ENCODE measurements at regions of chr9 and their contacts with region 1.

Region 1: GRCh38 chr9:116484492-116485061 is 202.5 kb upstream of the TRIM32 start:
- DNase-seq: no peak
- H3K4me3 Mint-ChIP-seq: no peak overlapping the region
- H3K27ac Mint-ChIP-seq: no peak overlapping the region
- H3K4me1 Mint-ChIP-seq: no peaks in the 10 kb centered on the region
- H3K27me3 Mint-ChIP-seq: no peaks in the 10 kb centered on the region
- CTCF ChIP-seq: no peak

Region 2: GRCh38 chr9:116394894-116395698 is 89.5 kb before region 1 on chr9:
- CTCF ChIA-PET with region 1: no interaction called
- POLR2A ChIA-PET with region 1: no interaction called
- intact Hi-C with region 1: no loop called
- DNase-seq: no peak
- H3K4me3 Mint-ChIP-seq: no peak overlapping the region
- H3K27ac Mint-ChIP-seq: no peak overlapping the region
- H3K4me1 Mint-ChIP-seq: peaks cover 6% of the 10 kb centered on the region
- H3K27me3 Mint-ChIP-seq: no peaks in the 10 kb centered on the region
- CTCF ChIP-seq: no peak

Region 3: DNA sequence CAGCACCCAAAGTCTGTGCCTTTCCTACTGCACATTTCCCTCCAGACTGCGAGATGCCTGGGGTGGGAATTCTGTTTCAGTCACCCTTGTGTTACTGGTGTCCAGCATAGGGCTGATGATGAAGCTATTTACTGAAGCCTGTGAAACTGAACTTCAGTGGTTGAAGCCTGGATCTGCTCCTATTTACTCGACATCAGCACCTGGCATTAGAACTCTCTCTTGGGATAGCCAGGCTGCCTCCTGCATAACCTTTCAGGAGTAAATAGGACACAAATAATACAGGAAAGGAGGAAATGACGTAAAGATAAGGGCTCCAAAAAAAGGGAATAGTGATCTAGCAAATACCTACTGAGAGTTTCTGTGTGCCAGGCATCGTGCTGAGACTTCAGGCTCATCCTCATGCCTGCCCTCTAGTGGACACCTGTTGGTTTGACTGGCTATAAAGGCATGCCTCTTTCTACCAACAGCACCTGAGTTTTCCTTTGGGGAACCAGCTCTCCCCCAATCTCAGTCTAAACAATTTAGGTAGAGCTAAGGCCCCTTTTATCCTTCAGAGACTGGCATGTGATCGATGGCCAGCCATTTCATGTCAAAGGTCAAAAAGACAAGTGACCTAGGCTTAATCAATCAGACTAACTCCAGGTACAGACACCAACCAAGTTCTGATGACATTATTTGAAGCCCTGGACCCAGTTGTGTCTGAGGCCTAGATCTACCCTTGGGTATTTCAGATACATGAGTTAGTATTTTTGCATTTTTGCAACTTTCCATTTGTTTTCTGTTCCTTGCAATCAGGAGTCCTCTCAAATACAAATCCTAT is 10.4 kb after region 1 on chr9:
- CTCF ChIA-PET with region 1: interaction called, 12 read pairs
- POLR2A ChIA-PET with region 1: no interaction called
- intact Hi-C with region 1: no loop called
- DNase-seq: peak; percentile 61
- H3K4me3 Mint-ChIP-seq: no peak overlapping the region
- H3K27ac Mint-ChIP-seq: no peak overlapping the region
- H3K4me1 Mint-ChIP-seq: peaks cover 5% of the 10 kb centered on the region
- H3K27me3 Mint-ChIP-seq: no peaks in the 10 kb centered on the region
- CTCF ChIP-seq: peak; percentile 61

Region 4: DNA sequence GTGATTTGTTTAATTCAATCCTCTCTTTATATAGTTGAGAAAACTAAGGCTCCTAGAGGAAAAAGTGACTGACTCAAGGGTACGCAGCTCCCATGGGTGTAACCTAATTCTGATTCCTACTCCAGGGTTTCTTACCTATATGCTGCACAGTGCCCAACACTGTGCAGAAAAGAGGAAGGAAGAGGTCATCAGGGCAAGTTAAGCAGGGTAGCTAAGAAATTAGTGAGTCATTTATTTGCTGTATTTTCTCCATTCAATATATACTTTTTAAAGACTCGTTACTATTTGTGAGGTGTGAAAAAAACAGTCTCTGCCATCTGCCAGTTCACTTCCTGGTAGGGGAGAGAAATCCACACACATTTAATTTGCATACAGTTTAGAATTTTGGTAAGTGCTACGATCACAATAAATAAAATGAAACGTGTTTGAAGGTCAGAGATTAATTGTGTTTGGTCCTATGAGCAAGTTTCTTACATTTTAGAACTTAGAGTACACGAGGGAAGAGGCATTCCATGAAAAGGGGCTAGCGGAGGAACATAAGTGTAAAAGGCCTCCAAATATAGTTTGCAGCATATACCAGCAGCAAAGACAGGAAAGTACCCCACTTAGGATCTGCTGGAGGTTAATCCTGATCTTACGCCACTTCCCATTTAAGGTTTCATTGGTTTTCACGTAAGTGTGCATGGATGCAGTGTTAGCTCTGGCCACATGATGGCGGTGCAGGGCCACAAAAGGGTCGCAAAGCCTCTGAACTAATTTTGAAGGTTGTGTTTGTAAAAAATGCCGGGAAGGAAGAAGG is 1159.8 kb after region 1 on chr9:
- CTCF ChIA-PET with region 1: no interaction called
- POLR2A ChIA-PET with region 1: no interaction called
- intact Hi-C with region 1: no loop called
- DNase-seq: peak; percentile 75
- H3K4me3 Mint-ChIP-seq: peak overlapping the region; percentile 5
- H3K27ac Mint-ChIP-seq: no peak overlapping the region
- H3K4me1 Mint-ChIP-seq: peaks cover 6% of the 10 kb centered on the region
- H3K27me3 Mint-ChIP-seq: no peaks in the 10 kb centered on the region
- CTCF ChIP-seq: peak; percentile 94

Measured in MCF 10A (cell line).